H1 (cell line): ENCODE measurements at regions of chr11 and their contacts with region 1.

Region 1: GRCh38 chr11:13261591-13262061 is 16.0 kb upstream of the BMAL1 start:
- DNase-seq: no peak
- H3K4me3 ChIP-seq: no peak overlapping the region
- H3K27ac ChIP-seq: no peak overlapping the region
- H3K4me1 ChIP-seq: peaks cover 3 to 17% (median 9%) of the 10 kb centered on the region in 4 experiments
- H3K27me3 ChIP-seq: no peaks in the 10 kb centered on the region
- CTCF ChIP-seq: no peak
- EP300 ChIP-seq: no peak
- POLR2A ChIP-seq: no peak
- RAD21 ChIP-seq: no peak

Region 2: GRCh38 chr11:13030857-13031256 is 230.8 kb before region 1 on chr11:
- CTCF ChIA-PET with region 1: no interaction called
- POLR2A ChIA-PET with region 1: no interaction called
- DNase-seq: no peak
- H3K4me3 ChIP-seq: no peak overlapping the region
- H3K27ac ChIP-seq: no peak overlapping the region
- H3K4me1 ChIP-seq: no peaks in the 10 kb centered on the region
- H3K27me3 ChIP-seq: no peaks in the 10 kb centered on the region
- CTCF ChIP-seq: no peak
- EP300 ChIP-seq: no peak
- POLR2A ChIP-seq: no peak
- RAD21 ChIP-seq: no peak

Region 3: GRCh38 chr11:13249996-13250395 is 11.6 kb before region 1 on chr11:
- CTCF ChIA-PET with region 1: interaction called, 81 read pairs
- POLR2A ChIA-PET with region 1: interaction called, 3 read pairs
- DNase-seq: no peak
- H3K4me3 ChIP-seq: no peak overlapping the region
- H3K27ac ChIP-seq: no peak overlapping the region
- H3K4me1 ChIP-seq: no peaks in the 10 kb centered on the region
- H3K27me3 ChIP-seq: no peaks in the 10 kb centered on the region
- CTCF ChIP-seq: peak in 2 of 3 experiments; percentile 31 to 40; a peak in 3 of 4 replicates
- EP300 ChIP-seq: no peak
- POLR2A ChIP-seq: no peak
- RAD21 ChIP-seq: peak; percentile 35 to 51; a peak in 3 of 4 replicates

Region 4: DNA sequence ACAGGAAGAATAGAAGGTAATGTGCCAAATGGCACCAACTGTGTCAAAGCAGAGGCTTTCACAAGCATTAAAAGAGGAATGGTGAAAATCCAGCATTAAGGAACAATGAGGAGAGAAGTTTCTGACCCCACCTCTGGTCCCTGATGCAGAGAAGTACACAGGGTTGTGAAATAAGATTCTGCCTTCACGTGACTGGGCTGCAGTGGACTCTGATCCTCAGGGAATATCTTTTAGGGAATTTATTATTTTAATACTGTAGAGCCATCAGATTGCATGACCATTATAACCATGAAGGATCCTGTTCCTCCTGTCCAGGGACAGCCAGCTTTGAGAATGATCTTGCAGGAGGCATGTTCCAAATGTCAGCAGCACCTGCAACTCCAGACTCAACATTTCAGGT is 332.4 kb after region 1 on chr11:
- CTCF ChIA-PET with region 1: no interaction called
- POLR2A ChIA-PET with region 1: no interaction called
- DNase-seq: no peak
- H3K4me3 ChIP-seq: no peak overlapping the region
- H3K27ac ChIP-seq: no peak overlapping the region
- H3K4me1 ChIP-seq: no peaks in the 10 kb centered on the region
- H3K27me3 ChIP-seq: no peaks in the 10 kb centered on the region
- CTCF ChIP-seq: no peak
- EP300 ChIP-seq: no peak
- POLR2A ChIP-seq: no peak
- RAD21 ChIP-seq: no peak